Activated CD4-positive, alpha-beta T cell treated with anti-CD3 and anti-CD28 coated beads for 36 hours (primary cell): ENCODE measurements at regions of chr2 and their contacts with region 1.

Region 1: GRCh38 chr2:17851731-17852585 is 26.5 kb upstream of the KCNS3 start:
- DNase-seq: peak; percentile 65
- ATAC-seq: no peak
- H3K4me3 Mint-ChIP-seq: no peak overlapping the region
- H3K27ac Mint-ChIP-seq: no peak overlapping the region
- H3K4me1 Mint-ChIP-seq: no peaks in the 10 kb centered on the region
- H3K27me3 Mint-ChIP-seq: peaks cover 11% of the 10 kb centered on the region

Region 2: DNA sequence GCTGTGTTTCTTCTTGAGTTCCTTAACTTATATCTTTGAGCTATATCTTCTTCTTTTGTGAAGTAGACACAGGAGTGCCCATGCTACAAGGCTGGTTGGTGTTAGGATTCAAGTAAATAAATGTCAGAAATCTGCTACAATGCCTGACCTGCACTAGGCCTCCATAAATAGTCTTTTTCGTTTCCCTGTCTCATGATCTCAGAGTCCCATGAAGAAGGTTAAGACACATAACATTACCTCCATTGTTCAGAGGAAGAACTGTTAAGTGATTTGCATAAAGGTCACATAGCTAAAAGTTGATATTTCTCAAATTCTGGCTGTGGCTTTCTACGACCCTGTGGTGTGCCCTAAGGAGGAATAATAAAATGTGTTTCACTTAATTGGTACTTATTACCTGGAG is 254.9 kb after region 1 on chr2:
- CTCF ChIA-PET with region 1: no interaction called
- POLR2A ChIA-PET with region 1: no interaction called
- intact Hi-C with region 1: no loop called
- DNase-seq: no peak
- ATAC-seq: no peak
- H3K4me3 Mint-ChIP-seq: no peak overlapping the region
- H3K27ac Mint-ChIP-seq: no peak overlapping the region
- H3K4me1 Mint-ChIP-seq: no peaks in the 10 kb centered on the region
- H3K27me3 Mint-ChIP-seq: peaks cover 4% of the 10 kb centered on the region

Region 3: DNA sequence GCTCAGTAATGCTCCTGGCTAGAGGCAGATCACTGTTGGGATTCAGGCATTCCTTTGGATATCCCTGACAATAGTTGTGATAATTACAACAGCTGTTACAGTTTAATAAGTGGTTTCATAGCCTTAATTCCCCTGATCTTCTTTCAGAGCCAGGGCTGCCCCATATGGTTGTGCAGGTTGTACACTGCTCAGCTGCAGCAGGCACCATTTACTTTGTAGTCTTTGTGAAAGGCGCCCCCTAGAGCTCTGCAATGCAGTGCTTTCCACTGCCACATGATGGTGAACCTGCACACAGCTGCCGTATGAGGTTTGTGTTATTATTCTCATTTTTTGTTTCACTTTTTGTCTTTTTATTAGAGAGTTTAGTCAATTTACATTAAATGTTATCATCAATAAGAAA is 265.6 kb after region 1 on chr2:
- CTCF ChIA-PET with region 1: no interaction called
- POLR2A ChIA-PET with region 1: no interaction called
- intact Hi-C with region 1: loop called in 1 of 2 experiments (anchors 1 kb)
- DNase-seq: peak; percentile 48
- ATAC-seq: peak; percentile 57
- H3K4me3 Mint-ChIP-seq: no peak overlapping the region
- H3K27ac Mint-ChIP-seq: no peak overlapping the region
- H3K4me1 Mint-ChIP-seq: no peaks in the 10 kb centered on the region
- H3K27me3 Mint-ChIP-seq: peaks cover 7% of the 10 kb centered on the region

Region 4: DNA sequence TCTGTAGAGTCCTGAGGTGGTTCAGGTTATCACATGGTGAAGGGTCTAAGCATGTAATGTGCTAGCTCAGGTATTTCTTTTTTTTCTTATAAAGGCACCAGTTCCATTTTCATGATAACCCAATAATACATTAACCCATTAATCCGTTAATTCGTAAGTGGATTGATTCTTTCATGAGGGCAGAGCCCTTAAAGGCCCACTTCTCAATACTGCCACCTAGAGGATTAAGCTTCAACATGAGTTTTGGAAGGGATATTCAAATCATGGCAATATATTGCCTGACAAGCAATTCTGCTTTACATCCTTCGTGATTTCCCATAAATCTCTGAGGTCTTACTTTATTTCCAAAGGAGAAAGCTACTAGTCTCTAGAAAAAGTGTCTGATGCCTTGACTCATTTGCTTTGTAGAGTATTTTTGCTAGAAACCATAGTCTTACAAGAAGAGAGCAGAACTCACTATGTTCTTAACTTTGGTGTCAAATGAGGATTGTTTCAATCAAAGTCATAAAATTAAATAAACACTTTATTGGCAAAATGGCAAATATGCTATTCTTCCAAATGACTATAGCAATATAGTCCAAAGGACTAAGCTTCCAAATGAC is 297.8 kb after region 1 on chr2:
- CTCF ChIA-PET with region 1: interaction called, 5 read pairs
- POLR2A ChIA-PET with region 1: no interaction called
- intact Hi-C with region 1: loop called (anchors 1 kb)
- DNase-seq: no peak
- ATAC-seq: peak; percentile 39
- H3K4me3 Mint-ChIP-seq: no peak overlapping the region
- H3K27ac Mint-ChIP-seq: no peak overlapping the region
- H3K4me1 Mint-ChIP-seq: no peaks in the 10 kb centered on the region
- H3K27me3 Mint-ChIP-seq: peaks cover 6% of the 10 kb centered on the region

Region 5: DNA sequence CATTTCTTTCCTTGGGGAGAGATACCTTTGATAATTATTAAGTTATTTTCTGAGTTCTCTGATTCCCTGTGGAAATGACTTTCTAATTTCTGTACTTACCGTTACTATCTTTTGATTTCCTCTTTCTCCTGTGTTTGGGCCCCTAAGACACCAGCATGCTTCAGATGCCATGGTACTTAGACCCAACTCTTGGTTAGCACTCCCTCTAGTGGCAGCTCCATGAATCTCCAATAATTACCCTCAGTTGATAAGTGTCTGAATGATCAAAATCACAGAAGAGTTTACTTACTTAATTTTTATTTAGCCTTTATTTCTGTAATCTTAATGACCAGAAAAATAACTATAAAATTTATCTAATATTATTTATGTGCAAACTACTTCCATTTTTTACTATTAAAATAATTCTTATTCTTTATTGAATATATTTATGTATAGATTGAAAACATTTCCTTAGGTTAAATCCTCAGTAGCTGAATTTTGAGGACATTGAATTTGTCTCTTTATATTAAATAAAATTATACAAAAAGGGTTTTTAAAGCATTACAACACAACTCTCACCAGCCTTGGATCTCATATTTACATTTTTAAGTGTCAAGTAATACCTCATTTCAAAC is 326.9 kb after region 1 on chr2:
- CTCF ChIA-PET with region 1: interaction called, 4 read pairs
- POLR2A ChIA-PET with region 1: no interaction called
- intact Hi-C with region 1: loop called (anchors 1 to 2 kb)
- DNase-seq: peak; percentile 52
- ATAC-seq: peak; percentile 55
- H3K4me3 Mint-ChIP-seq: no peak overlapping the region
- H3K27ac Mint-ChIP-seq: no peak overlapping the region
- H3K4me1 Mint-ChIP-seq: no peaks in the 10 kb centered on the region
- H3K27me3 Mint-ChIP-seq: peaks cover 6% of the 10 kb centered on the region

Region 6: GRCh38 chr2:18378020-18378653 is 526.2 kb after region 1 on chr2:
- CTCF ChIA-PET with region 1: interaction called, 3 read pairs
- POLR2A ChIA-PET with region 1: no interaction called
- intact Hi-C with region 1: loop called (anchors 1 kb)
- DNase-seq: peak; percentile 39
- ATAC-seq: peak; percentile 55
- H3K4me3 Mint-ChIP-seq: no peak overlapping the region
- H3K27ac Mint-ChIP-seq: no peak overlapping the region
- H3K4me1 Mint-ChIP-seq: no peaks in the 10 kb centered on the region
- H3K27me3 Mint-ChIP-seq: peaks cover 4% of the 10 kb centered on the region